ENCODE measurements at regions of chr3 and their contacts with region 1.

Region 1: GRCh38 chr3:197599089-197599765 is 43.5 kb upstream of the BDH1 start:
- DNase-seq: peak; percentile 57 to 75
- ATAC-seq: peak; percentile 85 to 93 (median 86)
- H3K4me3 ChIP-seq: peak overlapping the region in 1 of 10 donors; percentile 25
- H3K27ac ChIP-seq: peak overlapping the region in 1 of 10 donors; percentile 37
- H3K4me1 ChIP-seq: peaks cover 0 to 19% (median 9%) of the 10 kb centered on the region in 9 donors
- H3K27me3 ChIP-seq: no peaks in the 10 kb centered on the region
- CTCF ChIP-seq: peak; percentile 82 to 96 (median 91)

Region 2: DNA sequence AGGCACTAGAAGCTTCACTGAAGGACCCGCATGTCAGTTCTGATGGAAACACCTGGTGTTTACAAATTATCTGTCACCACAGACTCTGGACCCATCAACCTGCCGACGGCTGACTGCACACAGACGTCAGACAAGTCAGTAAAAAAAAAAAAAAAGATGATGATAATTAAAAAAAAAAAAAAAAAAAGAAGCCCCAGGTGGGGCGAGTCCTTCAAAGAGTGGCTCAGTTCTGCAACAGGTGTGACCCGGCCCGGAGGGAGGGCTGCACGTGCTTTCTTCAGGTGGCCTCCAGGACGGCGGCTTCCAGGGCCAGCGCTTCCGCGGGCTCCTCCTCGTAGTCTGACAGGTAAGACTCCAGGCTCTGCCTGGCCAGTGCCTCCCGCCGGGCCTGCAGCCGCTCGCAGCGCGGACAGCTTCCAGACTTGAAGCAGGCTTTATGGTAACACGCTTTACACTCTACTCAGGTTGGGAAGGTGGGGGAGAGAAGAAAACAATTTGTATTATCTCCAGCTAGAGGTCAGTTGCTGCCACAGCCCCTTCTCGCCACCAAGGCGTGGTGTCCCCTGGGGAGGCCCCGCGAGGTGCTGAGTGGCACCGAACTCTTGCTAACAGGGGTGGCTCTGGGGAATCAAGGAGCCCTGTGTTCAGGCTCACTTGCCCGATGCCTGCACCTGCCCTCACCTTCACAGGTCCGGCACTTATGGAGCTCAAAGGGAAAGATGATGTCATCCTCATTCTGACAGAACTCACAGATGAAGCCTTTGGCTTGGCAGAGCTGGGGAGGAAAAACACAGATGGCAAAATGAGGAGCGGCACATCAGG is 75.7 kb after region 1 on chr3:
- intact Hi-C with region 1: loop called in 3 of 10 experiments (anchors 1 to 10 kb)
- DNase-seq: no peak
- ATAC-seq: no peak
- H3K4me3 ChIP-seq: no peak overlapping the region
- H3K27ac ChIP-seq: no peak overlapping the region
- H3K4me1 ChIP-seq: peaks cover 0 to 13% (median 0%) of the 10 kb centered on the region in 9 donors
- H3K27me3 ChIP-seq: no peaks in the 10 kb centered on the region
- CTCF ChIP-seq: no peak

Measured in heart right ventricle (tissue), 16 donors.